ENCODE measurements at regions of chr6 and their contacts with region 1.

Region 1: DNA sequence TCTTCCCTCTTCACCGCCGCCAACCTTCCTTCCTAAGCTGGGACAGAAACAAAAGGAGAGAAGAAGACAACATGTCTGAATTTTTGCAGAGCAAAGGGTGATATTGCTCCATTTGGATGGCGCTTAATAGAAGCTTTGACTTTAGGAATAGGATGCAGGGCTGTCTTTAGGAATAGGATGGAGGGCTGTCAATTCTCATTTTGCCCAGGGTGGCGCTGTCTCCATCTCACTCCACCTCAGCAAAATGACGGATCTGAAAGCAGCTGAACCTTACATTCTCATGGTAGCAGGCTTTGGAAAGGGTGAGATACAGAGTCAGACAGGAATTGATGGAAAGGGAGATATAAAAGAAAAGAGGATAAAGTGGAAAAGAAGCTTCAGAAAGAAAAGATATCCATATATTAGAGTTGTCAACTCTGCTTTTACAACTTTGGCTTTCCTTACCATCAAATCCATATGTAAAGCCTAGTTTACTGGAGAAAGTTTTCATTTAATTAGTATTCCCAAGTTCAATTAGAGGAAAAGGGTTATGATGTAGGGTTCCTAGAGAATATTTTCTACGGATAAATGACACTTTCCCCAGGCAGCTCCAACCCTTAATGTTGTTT is 2.4 kb downstream of the MTCL3 start:
- DNase-seq: no peak
- ATAC-seq: peak; percentile 87
- H3K4me3 ChIP-seq: peak overlapping the region; percentile 62
- H3K27ac ChIP-seq: no peak overlapping the region
- H3K4me1 ChIP-seq: peaks cover 4% of the 10 kb centered on the region
- H3K27me3 ChIP-seq: peaks cover 8 to 15% of the 10 kb centered on the region in 2 experiments
- CTCF ChIP-seq: peak; percentile 62 to 82 (median 80)
- EP300 ChIP-seq: no peak
- POLR2A ChIP-seq: no peak
- RAD21 ChIP-seq: 0 out of 2 replicates have a peak, but pooled peaks have one; percentile 6

Region 2: DNA sequence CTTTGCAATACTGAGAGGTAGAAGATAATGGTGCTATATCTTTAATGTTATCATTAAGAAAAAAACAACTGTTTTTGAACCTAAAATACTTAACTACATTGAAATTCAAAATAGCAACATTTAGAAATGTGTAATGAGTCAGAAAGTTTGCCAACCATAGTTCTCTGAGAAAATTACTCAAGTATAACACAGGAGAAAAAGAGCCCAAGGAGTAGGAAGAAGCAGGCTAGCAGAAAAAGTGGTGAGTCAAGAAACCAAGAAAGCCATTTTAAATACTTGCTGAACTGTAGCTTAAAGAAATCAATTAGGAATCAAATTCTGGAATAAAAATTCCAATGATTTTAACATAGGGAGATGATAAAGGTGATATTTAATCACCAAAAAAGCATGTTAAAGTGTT is 579.3 kb before region 1 on chr6:
- CTCF ChIA-PET with region 1: no interaction called
- POLR2A ChIA-PET with region 1: no interaction called
- RAD21 ChIA-PET with region 1: no interaction called
- SMC1A ChIA-PET with region 1: no interaction called
- in situ Hi-C with region 1: no loop called
- intact Hi-C with region 1: no loop called
- DNase-seq: no peak
- ATAC-seq: no peak
- H3K4me3 ChIP-seq: no peak overlapping the region
- H3K27ac ChIP-seq: no peak overlapping the region
- H3K4me1 ChIP-seq: no peaks in the 10 kb centered on the region
- H3K27me3 ChIP-seq: no peaks in the 10 kb centered on the region
- CTCF ChIP-seq: no peak
- EP300 ChIP-seq: no peak
- POLR2A ChIP-seq: no peak
- RAD21 ChIP-seq: no peak

Region 3: DNA sequence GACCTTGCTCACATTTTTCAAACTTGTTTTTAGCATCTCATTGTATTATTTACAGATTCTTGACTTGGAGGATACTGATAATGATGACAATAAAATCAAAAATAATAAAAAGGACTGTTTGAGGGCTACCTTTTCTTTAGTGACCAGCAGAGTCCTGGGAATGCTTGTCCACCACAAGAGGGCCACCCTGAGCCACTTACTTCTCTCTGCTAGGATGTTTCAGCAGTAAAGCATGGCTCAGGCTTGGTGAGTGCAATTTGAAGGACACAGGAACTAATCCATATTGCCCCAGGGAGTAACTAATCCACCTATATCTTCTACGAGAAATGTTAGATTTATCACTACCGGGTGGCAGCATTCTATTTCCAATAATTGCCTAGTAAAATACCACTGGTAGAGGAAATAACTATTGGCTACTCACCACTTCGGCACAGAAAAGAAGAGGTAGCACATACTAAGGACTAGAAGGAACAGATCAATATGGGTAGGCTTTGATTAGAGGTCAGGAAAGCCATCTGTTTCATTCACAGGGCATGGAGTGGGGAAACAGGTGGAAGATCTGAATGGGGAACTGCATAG is 51.8 kb before region 1 on chr6:
- CTCF ChIA-PET with region 1: interaction called, 21 read pairs
- POLR2A ChIA-PET with region 1: interaction called, 3 read pairs
- RAD21 ChIA-PET with region 1: interaction called, 14 read pairs
- SMC1A ChIA-PET with region 1: interaction called, 21 read pairs
- in situ Hi-C with region 1: no loop called
- intact Hi-C with region 1: no loop called
- DNase-seq: no peak
- ATAC-seq: peak; percentile 98
- H3K4me3 ChIP-seq: no peak overlapping the region
- H3K27ac ChIP-seq: no peak overlapping the region
- H3K4me1 ChIP-seq: no peaks in the 10 kb centered on the region
- H3K27me3 ChIP-seq: no peaks in the 10 kb centered on the region
- CTCF ChIP-seq: peak; percentile 81 to 88 (median 83)
- EP300 ChIP-seq: no peak
- POLR2A ChIP-seq: no peak
- RAD21 ChIP-seq: peak; percentile 88

Region 4: DNA sequence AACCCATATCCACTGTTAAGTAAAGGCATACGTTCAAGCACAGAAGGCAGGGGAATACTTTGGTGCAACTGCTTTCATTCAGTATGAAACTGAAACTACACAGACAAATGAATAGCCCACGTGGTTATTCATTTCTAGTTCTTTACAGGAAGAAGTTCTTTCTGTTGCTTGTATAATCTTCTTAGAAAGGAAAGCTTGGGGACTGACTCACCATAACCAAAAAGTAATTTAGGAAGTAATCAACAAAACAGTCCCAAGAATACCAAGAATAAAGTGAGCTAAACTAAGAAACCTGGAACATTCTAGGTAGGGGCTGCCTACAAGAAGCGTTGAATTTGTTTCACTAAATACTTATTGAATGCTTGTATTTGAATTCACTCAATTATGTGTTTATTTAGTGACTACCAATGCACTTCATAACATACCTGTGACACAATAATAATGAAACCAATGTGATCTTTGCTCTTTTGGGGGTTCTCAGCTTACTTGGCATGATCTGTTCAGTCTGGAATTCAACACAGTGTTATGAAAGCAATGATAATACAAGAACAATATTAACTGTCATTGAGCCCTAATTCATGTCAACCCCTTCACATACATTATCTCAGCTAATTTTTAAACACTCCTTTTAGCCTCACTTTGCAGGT is 32.4 kb before region 1 on chr6:
- CTCF ChIA-PET with region 1: interaction called, 25 read pairs
- POLR2A ChIA-PET with region 1: interaction called, 7 read pairs
- RAD21 ChIA-PET with region 1: interaction called, 4 read pairs
- SMC1A ChIA-PET with region 1: interaction called, 13 read pairs
- in situ Hi-C with region 1: no loop called
- intact Hi-C with region 1: no loop called
- DNase-seq: peak; percentile 39
- ATAC-seq: peak; percentile 98
- H3K4me3 ChIP-seq: peak overlapping the region; percentile 9; the same call in 1 of the 2 replicates
- H3K27ac ChIP-seq: peak overlapping the region; percentile 19; the same call in 1 of the 2 replicates
- H3K4me1 ChIP-seq: peaks cover 9% of the 10 kb centered on the region
- H3K27me3 ChIP-seq: no peaks in the 10 kb centered on the region
- CTCF ChIP-seq: no peak
- EP300 ChIP-seq: no peak; a peak in 1 of 4 replicates
- POLR2A ChIP-seq: no peak
- RAD21 ChIP-seq: no peak

Region 5: GRCh38 chr6:127503022-127503421 is 13.7 kb before region 1 on chr6:
- CTCF ChIA-PET with region 1: interaction called, 18 read pairs
- POLR2A ChIA-PET with region 1: interaction called, 5 read pairs
- RAD21 ChIA-PET with region 1: interaction called, 3 read pairs
- SMC1A ChIA-PET with region 1: interaction called, 5 read pairs
- in situ Hi-C with region 1: no loop called
- intact Hi-C with region 1: no loop called
- DNase-seq: no peak
- ATAC-seq: no peak
- H3K4me3 ChIP-seq: no peak overlapping the region
- H3K27ac ChIP-seq: no peak overlapping the region
- H3K4me1 ChIP-seq: no peaks in the 10 kb centered on the region
- H3K27me3 ChIP-seq: no peaks in the 10 kb centered on the region
- CTCF ChIP-seq: no peak
- EP300 ChIP-seq: no peak
- POLR2A ChIP-seq: no peak
- RAD21 ChIP-seq: no peak

Region 6: GRCh38 chr6:127539272-127539671 is 22.5 kb after region 1 on chr6:
- CTCF ChIA-PET with region 1: interaction called, 28 read pairs
- POLR2A ChIA-PET with region 1: no interaction called
- RAD21 ChIA-PET with region 1: interaction called, 5 read pairs
- SMC1A ChIA-PET with region 1: interaction called, 8 read pairs
- in situ Hi-C with region 1: no loop called
- intact Hi-C with region 1: no loop called
- DNase-seq: no peak
- ATAC-seq: peak; percentile 69
- H3K4me3 ChIP-seq: no peak overlapping the region
- H3K27ac ChIP-seq: no peak overlapping the region
- H3K4me1 ChIP-seq: no peaks in the 10 kb centered on the region
- H3K27me3 ChIP-seq: no peaks in the 10 kb centered on the region
- CTCF ChIP-seq: peak in 2 of 3 experiments; percentile 19 to 49; a peak in 2 of 6 replicates
- EP300 ChIP-seq: no peak
- POLR2A ChIP-seq: no peak
- RAD21 ChIP-seq: peak; percentile 53